GM10248 (cell line): ENCODE measurements at regions of chr19 and their contacts with region 1.

Region 1: GRCh38 chr19:45164577-45165335 is 4.0 kb upstream of the NKPD1 start:
- DNase-seq: peak; percentile 88
- CTCF ChIP-seq: peak; percentile 29

Region 2: DNA sequence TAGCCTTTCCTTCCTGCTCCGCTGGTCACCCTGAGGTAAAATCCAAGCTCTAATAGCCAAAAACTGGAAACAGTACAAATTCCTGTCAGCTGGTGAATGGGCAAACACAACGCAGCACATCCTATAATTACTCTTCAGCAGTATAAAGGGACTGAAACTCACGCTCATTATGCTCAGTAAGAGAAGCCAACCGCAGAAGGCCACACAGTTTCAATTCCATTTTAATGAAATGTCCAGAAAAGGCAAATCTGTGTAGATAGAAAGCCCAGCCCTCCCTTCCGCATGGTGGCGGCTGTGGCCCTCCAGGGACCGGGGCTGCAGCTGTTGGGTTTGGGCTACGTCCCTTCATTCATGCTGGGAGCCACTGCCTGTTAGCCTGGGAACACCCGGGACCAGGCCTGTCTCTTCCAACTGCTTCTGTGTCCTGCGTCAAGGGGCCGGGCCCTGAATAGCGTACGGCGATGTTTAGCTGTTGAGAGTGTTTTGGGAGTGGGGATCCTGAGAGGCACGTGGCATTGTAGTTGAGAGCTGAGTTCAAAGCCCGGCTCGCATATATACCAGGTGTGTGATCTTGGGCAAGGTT is 27.5 kb before region 1 on chr19:
- CTCF ChIA-PET with region 1: interaction called, 10 read pairs
- POLR2A ChIA-PET with region 1: no interaction called
- DNase-seq: peak; percentile 86
- CTCF ChIP-seq: peak; percentile 40

Region 3: GRCh38 chr19:45178262-45179071 is 13.7 kb after region 1 on chr19 and contains the start of gene BLOC1S3:
- CTCF ChIA-PET with region 1: interaction called, 15 read pairs
- POLR2A ChIA-PET with region 1: interaction called, 4 read pairs
- DNase-seq: peak; percentile 97
- CTCF ChIP-seq: peak; percentile 40

Region 4: GRCh38 chr19:45195764-45196163 is 31.0 kb after region 1 on chr19:
- CTCF ChIA-PET with region 1: no interaction called
- POLR2A ChIA-PET with region 1: no interaction called
- DNase-seq: no peak
- CTCF ChIP-seq: no peak

Region 5: DNA sequence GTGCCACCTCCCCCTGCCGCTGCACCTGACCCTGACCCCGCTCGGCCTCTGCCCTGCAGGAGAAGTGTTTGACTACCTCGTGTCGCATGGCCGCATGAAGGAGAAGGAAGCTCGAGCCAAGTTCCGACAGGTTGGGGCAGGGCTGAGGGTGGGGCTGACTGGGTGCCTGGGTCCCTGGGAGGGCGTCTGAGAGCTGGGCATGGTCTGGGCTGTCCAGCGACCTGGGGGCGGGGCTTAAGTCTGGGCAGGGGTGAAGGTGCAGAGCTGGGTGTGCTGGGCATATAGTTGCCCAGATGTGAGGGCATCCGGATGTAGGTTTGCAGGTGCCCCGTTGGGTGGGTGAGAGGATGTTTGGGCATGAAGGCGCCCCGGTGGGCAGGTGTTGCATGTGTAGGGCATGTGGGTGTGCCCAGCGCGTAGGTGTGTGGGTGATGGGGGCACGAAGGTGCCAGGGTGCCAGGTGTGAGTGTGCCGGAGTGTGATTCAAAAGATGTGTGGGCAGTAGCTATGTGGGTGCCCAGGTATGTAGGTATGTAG is 100.1 kb after region 1 on chr19:
- CTCF ChIA-PET with region 1: no interaction called
- POLR2A ChIA-PET with region 1: no interaction called
- DNase-seq: no peak
- CTCF ChIP-seq: no peak

Region 6: GRCh38 chr19:45862564-45863334 is 698.0 kb after region 1 on chr19 and contains the start of gene SYMPK:
- CTCF ChIA-PET with region 1: no interaction called
- POLR2A ChIA-PET with region 1: no interaction called
- DNase-seq: peak; percentile 100
- CTCF ChIP-seq: no peak